ENCODE measurements at regions of chr17 and their contacts with region 1.

Region 1: GRCh38 chr17:9959377-9959981 is 54.4 kb upstream of the RCVRN start:
- DNase-seq: peak; percentile 60
- ATAC-seq: peak; percentile 32

Region 2: DNA sequence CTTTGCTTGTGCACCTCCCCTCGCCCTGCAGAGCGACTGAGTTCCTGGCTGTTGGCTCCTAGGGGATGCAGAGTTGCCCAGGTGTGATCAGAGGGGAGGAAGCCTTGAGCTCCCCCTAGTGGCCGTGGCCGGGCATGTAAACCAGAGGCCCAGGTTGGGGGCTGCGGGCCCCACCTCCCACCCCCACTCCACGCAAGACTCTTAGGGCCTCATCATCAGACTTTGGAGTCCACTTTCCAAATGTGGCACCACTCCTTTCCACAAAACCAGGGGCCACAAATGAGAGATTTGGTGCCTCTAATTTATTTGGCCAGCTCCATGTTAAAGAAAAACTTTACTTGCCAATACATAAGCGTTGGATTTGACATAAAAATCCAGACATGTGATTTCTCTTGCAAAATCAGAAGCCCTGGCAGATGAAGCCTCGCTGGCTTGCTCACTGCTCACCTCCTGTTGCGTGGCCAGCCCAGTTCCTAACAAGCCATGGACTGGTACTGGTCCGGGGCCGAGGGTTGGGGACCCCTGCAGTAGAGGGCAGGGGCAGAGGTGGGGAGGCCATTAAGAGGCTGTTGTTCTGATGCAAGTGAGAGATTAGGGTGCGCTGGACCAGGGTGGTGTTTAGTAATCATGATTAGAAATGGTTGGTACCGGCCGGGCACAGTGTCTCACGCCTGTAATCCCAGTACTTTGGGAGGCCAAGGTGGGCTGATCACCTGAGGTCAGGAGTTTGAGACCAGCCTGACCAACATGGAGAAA is 267.6 kb after region 1 on chr17:
- intact Hi-C with region 1: loop called (anchors 5 kb)
- DNase-seq: peak; percentile 80
- ATAC-seq: peak; percentile 88

Measured in left ventricle myocardium superior (tissue), 1 donor.